ENCODE measurements at regions of chr2 and their contacts with region 1.

Region 1: GRCh38 chr2:157911750-157912149 is 35.6 kb upstream of the ACVR1 start:
- DNase-seq: no peak
- ATAC-seq: no peak
- H3K4me3 ChIP-seq: no peak overlapping the region
- H3K27ac ChIP-seq: no peak overlapping the region
- H3K4me1 ChIP-seq: peaks cover 0 to 15% of the 10 kb centered on the region in 2 experiments; a peak in 3 of 5 replicates
- H3K27me3 ChIP-seq: no peaks in the 10 kb centered on the region
- CTCF ChIP-seq: no peak
- EP300 ChIP-seq: no peak
- POLR2A ChIP-seq: no peak
- RAD21 ChIP-seq: no peak

Region 2: DNA sequence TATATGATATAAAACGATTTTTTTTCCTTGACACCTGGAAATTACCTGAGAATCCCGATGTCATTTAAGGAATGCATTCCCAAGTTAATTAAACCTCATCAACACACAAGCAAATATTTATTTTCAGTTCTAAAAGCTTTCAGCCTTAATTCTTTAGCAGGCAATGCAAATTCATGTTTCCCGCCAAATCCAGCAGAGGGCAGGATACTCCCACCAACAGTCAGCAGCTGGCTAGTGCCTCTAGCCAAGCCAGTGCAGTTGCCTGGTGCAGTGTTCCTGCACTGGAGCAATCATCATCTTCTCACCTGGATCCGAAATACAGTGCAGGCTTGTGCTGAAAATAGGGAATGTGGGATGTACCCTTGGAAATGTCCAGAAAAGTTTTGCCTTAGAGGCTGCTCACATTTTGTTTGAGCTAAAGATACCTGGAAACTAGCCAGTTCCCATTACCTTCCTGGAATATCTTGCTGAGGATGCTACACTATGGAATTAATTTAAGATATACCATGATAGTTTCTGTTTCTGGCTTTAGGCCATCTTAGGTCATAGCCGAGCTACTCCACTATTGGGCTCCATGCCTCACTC is 419.5 kb before region 1 on chr2:
- CTCF ChIA-PET with region 1: no interaction called
- POLR2A ChIA-PET with region 1: no interaction called
- in situ Hi-C with region 1: no loop called
- intact Hi-C with region 1: loop called (anchors 10 kb)
- DNase-seq: peak; percentile 29 to 78 (median 54)
- ATAC-seq: peak; percentile 98
- H3K4me3 ChIP-seq: no peak overlapping the region
- H3K27ac ChIP-seq: no peak overlapping the region
- H3K4me1 ChIP-seq: no peaks in the 10 kb centered on the region
- H3K27me3 ChIP-seq: peaks cover 0 to 4% of the 10 kb centered on the region in 2 experiments; a peak in 1 of 5 replicates
- CTCF ChIP-seq: peak; percentile 84 to 94 (median 87)
- EP300 ChIP-seq: no peak
- POLR2A ChIP-seq: no peak
- RAD21 ChIP-seq: peak; percentile 92 to 96

Measured in K562 (cell line).